ENCODE measurements at regions of chr16 and their contacts with region 1.

Region 1: GRCh38 chr16:16062023-16062932 is 112.9 kb downstream of the ABCC1 start:
- DNase-seq: peak; percentile 98 to 100 (median 99)
- H3K4me3 ChIP-seq: peak overlapping the region in 2 of 7 experiments; percentile 18 to 26
- H3K27ac ChIP-seq: peak overlapping the region; percentile 80 to 90
- H3K4me1 ChIP-seq: peaks cover 10 to 54% (median 45%) of the 10 kb centered on the region in 4 experiments
- H3K27me3 ChIP-seq: no peaks in the 10 kb centered on the region

Region 2: DNA sequence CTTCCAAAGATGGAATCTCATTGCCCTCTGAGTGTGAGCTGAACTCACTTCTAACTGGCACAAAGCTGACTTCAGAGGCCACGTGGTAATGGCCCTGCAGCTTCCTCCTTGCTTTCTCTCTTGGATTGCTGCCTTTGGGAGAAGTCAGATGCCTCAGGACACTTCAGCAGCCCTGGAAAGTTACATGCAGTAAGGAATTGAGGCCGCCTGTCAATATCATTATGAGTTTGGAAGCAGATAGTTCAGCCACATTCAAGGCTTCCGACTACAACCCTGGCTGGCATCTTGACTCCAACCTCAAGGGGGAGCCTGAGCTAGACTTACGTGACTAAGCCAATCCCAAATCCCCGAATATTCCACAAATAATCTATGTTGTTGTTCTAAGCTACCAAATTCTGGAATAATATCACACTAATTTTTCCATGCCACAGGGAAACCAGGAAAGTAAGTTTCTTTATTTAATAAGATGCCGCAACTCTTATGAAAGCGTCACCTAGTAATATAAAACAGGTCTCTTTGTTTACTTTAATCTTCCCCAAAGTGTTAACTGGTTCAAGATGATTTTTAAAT is 187.4 kb before region 1 on chr16:
- CTCF ChIA-PET with region 1: interaction called, 13 read pairs
- POLR2A ChIA-PET with region 1: no interaction called
- DNase-seq: peak; percentile 49 to 63 (median 58)
- H3K4me3 ChIP-seq: peak overlapping the region in 1 of 7 experiments; percentile 59
- H3K27ac ChIP-seq: peak overlapping the region; percentile 12 to 54
- H3K4me1 ChIP-seq: peaks cover 0 to 16% (median 10%) of the 10 kb centered on the region in 4 experiments
- H3K27me3 ChIP-seq: no peaks in the 10 kb centered on the region

Region 3: DNA sequence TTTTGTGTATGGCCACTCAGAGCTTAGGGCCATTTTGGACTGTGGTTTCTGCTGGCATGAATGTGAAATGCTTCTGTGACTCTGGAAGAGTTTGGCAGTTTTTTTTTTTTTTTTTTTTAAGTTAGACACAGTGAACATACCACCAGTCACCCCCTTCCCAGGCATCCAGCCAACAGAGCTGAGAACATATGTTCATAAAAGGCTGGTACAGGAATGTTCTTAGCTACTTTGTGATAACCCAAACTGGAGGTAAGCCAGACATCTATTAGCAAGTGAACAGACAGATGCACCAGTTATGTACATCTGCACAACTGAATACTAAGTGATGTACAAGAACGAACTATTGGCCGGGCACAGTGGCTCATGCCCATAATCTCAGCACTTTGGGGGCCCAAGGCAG is 20.2 kb before region 1 on chr16:
- CTCF ChIA-PET with region 1: interaction called, 159 read pairs
- POLR2A ChIA-PET with region 1: interaction called, 3 read pairs
- DNase-seq: peak in 2 of 3 donors; percentile 60 to 79
- H3K4me3 ChIP-seq: no peak overlapping the region
- H3K27ac ChIP-seq: peak overlapping the region in 1 of 2 experiments; percentile 18
- H3K4me1 ChIP-seq: peaks cover 0 to 32% (median 18%) of the 10 kb centered on the region in 4 experiments
- H3K27me3 ChIP-seq: no peaks in the 10 kb centered on the region

Region 4: GRCh38 chr16:16073891-16074881 is 11.9 kb after region 1 on chr16:
- CTCF ChIA-PET with region 1: interaction called, 102 read pairs
- POLR2A ChIA-PET with region 1: interaction called, 27 read pairs
- DNase-seq: peak; percentile 65 to 91 (median 84)
- H3K4me3 ChIP-seq: peak overlapping the region in 2 of 7 experiments; percentile 17 to 30
- H3K27ac ChIP-seq: peak overlapping the region; percentile 79 to 84
- H3K4me1 ChIP-seq: peaks cover 14 to 81% (median 67%) of the 10 kb centered on the region in 4 experiments
- H3K27me3 ChIP-seq: no peaks in the 10 kb centered on the region

Region 5: DNA sequence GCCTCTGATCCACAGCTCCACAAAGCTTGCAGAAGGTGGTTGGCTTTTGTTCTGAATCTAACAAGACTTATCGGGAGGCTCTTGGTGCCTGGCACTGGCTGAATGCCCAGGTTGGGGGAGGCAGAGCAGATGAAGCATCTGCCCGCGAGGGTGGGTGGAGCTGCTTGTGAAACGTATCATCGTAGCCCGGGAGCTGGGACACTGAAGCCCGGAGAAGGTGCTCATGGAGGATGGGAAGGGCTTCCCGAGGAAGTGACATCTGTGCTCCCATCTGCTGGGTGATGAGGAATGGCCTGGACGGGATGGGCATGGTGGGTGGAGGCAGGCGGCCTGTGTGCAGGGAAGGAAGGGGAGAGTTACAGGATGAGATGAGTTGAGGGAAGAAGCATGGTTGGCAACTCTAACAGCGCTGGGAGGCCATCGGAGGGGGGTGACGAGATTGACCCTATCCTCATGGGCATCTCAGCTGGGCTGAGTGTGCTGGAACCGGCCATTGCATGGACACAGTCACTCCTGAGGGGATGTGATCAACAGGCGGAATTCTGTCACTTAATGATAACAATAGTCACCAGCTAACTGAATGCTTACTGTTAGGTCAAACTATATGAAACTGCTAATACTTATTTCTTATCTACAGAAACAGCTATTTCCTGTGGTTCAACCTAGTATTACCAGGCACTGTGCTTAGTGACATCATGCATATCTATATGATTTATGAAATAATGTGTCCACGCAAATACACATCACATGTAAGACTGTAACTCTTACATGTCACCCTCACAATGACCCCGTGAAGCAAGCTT is 58.3 kb after region 1 on chr16:
- CTCF ChIA-PET with region 1: interaction called, 69 read pairs
- POLR2A ChIA-PET with region 1: interaction called, 23 read pairs
- DNase-seq: peak; percentile 95 to 99 (median 97)
- H3K4me3 ChIP-seq: peak overlapping the region in 6 of 7 experiments; percentile 25 to 61 (median 52)
- H3K27ac ChIP-seq: peak overlapping the region; percentile 98 to 99
- H3K4me1 ChIP-seq: peaks cover 3 to 40% (median 29%) of the 10 kb centered on the region in 4 experiments
- H3K27me3 ChIP-seq: no peaks in the 10 kb centered on the region

Region 6: DNA sequence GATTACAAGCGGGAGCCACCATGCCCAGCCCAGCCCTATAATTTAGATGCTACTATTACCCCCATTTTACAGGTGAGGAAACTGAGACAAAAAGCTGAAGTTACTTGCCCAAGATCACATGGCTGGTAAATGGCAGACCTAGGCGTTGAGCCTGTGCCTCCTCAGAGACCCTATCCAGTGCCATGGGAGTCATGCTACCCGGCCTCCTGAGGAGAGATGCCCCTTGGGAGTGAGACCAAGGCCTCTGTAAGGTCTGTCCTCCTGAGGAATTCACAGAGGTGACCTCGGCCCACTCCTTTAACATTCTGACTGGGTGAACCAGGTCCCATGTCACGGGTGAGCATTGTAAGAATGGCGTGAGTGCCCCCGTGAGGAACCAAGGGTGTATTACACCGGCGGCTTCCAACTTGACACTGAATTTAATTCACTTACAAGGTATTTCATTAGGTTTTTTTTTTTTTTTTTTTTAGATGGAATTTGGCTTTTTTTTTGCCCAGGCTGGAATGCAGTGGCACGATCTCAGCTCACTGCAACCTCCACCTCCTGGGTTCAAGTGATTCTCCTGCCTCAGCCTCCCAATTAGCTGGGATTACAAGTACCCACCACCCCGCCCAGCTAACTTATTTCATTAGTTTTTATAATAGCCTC is 65.3 kb after region 1 on chr16:
- CTCF ChIA-PET with region 1: interaction called, 69 read pairs
- POLR2A ChIA-PET with region 1: interaction called, 8 read pairs
- DNase-seq: peak; percentile 85 to 93 (median 91)
- H3K4me3 ChIP-seq: no peak overlapping the region
- H3K27ac ChIP-seq: peak overlapping the region; percentile 38 to 71
- H3K4me1 ChIP-seq: peaks cover 0 to 20% (median 9%) of the 10 kb centered on the region in 4 experiments
- H3K27me3 ChIP-seq: no peaks in the 10 kb centered on the region